Vagina (tissue), 2 donors: ENCODE measurements at regions of chr5 and their contacts with region 1.

Region 1: DNA sequence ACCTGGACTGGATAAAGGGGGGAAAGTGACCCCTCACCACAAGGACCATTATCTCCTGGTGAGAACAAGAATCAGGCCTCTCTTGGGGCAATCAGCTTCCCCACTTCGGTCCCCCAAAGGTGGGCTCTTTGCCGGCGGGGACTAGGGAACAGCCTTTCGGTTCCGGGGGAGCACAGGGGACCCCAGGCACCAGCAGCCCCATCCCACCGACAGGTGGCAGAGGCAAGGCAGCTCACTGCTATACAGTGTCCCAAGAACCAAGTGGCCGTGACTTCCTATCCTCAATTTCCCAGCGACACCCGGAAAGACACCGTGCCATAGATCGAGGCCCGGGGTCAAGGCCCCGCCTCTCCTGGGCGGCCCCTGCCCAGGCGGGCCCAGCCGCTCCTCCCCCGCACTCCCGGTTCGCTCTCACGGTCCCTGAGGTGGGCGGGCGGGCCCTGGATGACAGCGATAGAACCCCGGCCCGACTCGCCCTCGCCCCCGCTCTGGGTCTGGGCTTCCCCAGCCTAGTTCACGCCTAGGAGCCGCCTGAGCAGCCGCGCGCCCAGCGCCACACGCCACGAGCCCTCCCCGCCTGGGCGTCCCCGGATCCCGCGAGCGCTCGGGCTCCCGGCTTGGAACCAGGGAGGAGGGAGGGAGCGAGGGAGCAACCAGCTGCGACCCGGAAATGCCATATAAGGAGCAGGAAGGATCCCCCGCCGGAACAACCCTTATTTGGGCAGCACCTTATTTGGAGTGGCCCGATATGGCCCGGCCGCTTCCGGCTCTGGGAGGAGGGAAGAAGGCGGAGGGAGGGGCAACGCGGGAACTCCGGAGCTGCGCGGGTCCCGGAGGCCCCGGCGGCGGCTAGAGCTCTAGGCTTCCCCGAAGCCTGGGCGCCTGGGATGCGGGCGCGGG is 641 bp upstream of the EGR1 start:
- DNase-seq: peak in 1 of 2 donors; percentile 99
- H3K4me3 ChIP-seq: peak overlapping the region; percentile 75 to 86
- H3K27ac ChIP-seq: peak overlapping the region; percentile 99
- H3K4me1 ChIP-seq: peaks cover 34% of the 10 kb centered on the region
- H3K27me3 ChIP-seq: no peaks in the 10 kb centered on the region
- CTCF ChIP-seq: peak in 1 of 3 experiments; percentile 38
- POLR2A ChIP-seq: peak in 1 of 2 donors; percentile 8

Region 2: GRCh38 chr5:138491669-138492559 is 27.3 kb after region 1 on chr5:
- intact Hi-C with region 1: loop called (anchors 1 kb)
- DNase-seq: no peak
- H3K4me3 ChIP-seq: peak overlapping the region; percentile 56 to 58
- H3K27ac ChIP-seq: peak overlapping the region; percentile 80
- H3K4me1 ChIP-seq: peaks cover 37% of the 10 kb centered on the region
- H3K27me3 ChIP-seq: no peaks in the 10 kb centered on the region
- CTCF ChIP-seq: no peak
- POLR2A ChIP-seq: no peak